Naive thymus-derived CD4-positive, alpha-beta T cell (primary cell): ENCODE measurements at regions of chr1 and their contacts with region 1.

Region 1: DNA sequence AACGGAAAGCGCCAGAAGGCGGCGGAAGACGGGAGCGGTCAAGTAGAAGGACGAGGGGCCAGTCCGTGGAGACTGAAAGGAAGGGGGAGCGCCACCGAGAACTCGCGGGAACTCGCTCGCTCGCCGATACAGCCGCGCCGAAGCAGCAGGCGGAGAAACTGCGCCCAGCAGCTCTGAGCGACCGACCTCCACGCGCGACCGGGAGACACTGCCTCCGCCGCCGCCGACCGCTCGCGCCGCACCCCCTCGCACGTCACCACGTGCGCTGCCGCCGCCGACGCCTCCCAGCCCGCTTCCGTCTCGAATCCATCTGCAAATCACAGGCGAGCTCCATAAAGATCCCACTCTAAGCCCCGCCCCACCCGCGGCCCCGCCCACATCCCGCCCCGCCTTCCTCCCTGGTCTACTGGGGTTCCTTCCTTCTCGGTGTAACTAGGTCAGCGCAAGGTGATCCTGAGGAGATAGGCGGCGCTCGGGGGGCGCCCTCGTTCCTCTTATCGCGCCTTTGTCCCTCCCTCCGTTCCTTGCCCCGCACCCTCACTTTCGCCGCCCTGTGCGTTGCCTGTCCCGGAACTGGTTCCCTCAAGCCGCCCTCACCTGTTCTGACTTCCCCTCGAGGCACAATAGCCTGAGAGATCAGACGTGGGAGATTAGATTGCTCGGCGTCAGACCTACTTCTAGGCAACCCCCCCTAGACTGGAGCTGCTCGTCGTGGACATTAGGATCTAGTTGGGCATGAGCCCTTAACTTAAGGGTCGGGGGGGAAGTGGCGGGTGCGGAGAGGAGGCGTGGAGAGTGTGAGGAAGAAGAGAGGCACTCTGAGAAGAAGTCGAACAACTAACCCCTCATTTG is at the start of gene IVNS1ABP:
- DNase-seq: peak; percentile 91 to 97 (median 95)
- ATAC-seq: peak; percentile 88
- H3K4me3 ChIP-seq: peak within 1 kb of the TSS; percentile 95
- H3K4me3 Mint-ChIP-seq: peak within 1 kb of the TSS; percentile 92 to 100 (median 98)
- H3K27ac ChIP-seq: peak within 1 kb of the TSS; percentile 99
- H3K27ac Mint-ChIP-seq: peak within 1 kb of the TSS; percentile 96 to 99 (median 99)
- H3K4me1 ChIP-seq: peaks cover 31 to 42% of the 10 kb centered on the region in 2 donors
- H3K4me1 Mint-ChIP-seq: peaks cover 39 to 55% (median 46%) of the 10 kb centered on the region in 7 donors
- H3K27me3 ChIP-seq: no peaks in the 10 kb centered on the region
- H3K27me3 Mint-ChIP-seq: peaks cover 0 to 2% (median 0%) of the 10 kb centered on the region in 5 donors
- total RNA-seq, gene IVNS1ABP: 169 to 268 (median 193) TPM

Region 2: GRCh38 chr1:184535191-184535970 is 781.9 kb before region 1 on chr1:
- CTCF ChIA-PET with region 1: no interaction called
- POLR2A ChIA-PET with region 1: no interaction called
- intact Hi-C with region 1: no loop called
- DNase-seq: no peak
- ATAC-seq: no peak
- H3K4me3 ChIP-seq: no peak overlapping the region
- H3K4me3 Mint-ChIP-seq: no peak overlapping the region
- H3K27ac ChIP-seq: no peak overlapping the region
- H3K27ac Mint-ChIP-seq: no peak overlapping the region
- H3K4me1 ChIP-seq: no peaks in the 10 kb centered on the region
- H3K4me1 Mint-ChIP-seq: peaks cover 0 to 8% (median 0%) of the 10 kb centered on the region in 7 donors
- H3K27me3 ChIP-seq: no peaks in the 10 kb centered on the region
- H3K27me3 Mint-ChIP-seq: peaks cover 6 to 22% (median 15%) of the 10 kb centered on the region in 5 donors

Region 3: GRCh38 chr1:184754476-184755225 is 562.6 kb before region 1 on chr1 and contains the start of gene EDEM3:
- CTCF ChIA-PET with region 1: no interaction called
- POLR2A ChIA-PET with region 1: no interaction called
- intact Hi-C with region 1: loop called (anchors 1 kb)
- DNase-seq: peak; percentile 86 to 100 (median 99)
- ATAC-seq: peak; percentile 96
- H3K4me3 ChIP-seq: peak within 1 kb of the TSS; percentile 84
- H3K4me3 Mint-ChIP-seq: peak within 1 kb of the TSS; percentile 87 to 96 (median 94)
- H3K27ac ChIP-seq: peak within 1 kb of the TSS; percentile 91
- H3K27ac Mint-ChIP-seq: peak within 1 kb of the TSS; percentile 71 to 97 (median 93)
- H3K4me1 ChIP-seq: peaks cover 9 to 13% of the 10 kb centered on the region in 2 donors
- H3K4me1 Mint-ChIP-seq: peaks cover 21 to 50% (median 46%) of the 10 kb centered on the region in 7 donors
- H3K27me3 ChIP-seq: no peaks in the 10 kb centered on the region
- H3K27me3 Mint-ChIP-seq: peaks cover 0 to 13% (median 0%) of the 10 kb centered on the region in 5 donors
- total RNA-seq, gene EDEM3: 21.0 to 55.9 (median 33.9) TPM

Region 4: DNA sequence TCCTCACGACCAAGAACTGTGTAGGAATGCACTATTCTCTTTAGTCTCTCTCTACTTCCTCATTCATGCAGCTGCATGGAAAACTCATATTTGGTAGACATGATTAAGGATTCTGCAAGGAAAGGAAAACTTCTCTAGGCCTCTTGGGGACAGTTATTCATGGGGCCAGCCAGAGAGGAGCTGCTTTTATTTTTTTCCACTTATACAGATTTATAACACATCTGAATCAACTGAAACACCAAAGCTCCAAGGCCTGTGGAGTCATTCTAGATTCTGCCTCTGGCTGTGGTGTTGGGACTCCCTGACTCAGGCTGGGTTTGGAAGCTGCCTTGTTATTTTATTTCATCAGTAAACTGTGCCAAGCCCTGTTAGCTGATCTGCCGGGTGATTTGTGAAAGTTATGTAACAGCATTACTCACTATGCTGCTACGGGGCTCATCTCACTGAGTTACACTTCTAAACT is 478.7 kb before region 1 on chr1:
- CTCF ChIA-PET with region 1: no interaction called
- POLR2A ChIA-PET with region 1: no interaction called
- intact Hi-C with region 1: no loop called
- DNase-seq: no peak
- ATAC-seq: peak; percentile 30
- H3K4me3 ChIP-seq: no peak overlapping the region
- H3K4me3 Mint-ChIP-seq: no peak overlapping the region
- H3K27ac ChIP-seq: no peak overlapping the region
- H3K27ac Mint-ChIP-seq: no peak overlapping the region
- H3K4me1 ChIP-seq: peaks cover 0 to 31% of the 10 kb centered on the region in 2 donors
- H3K4me1 Mint-ChIP-seq: peaks cover 0 to 19% (median 5%) of the 10 kb centered on the region in 7 donors
- H3K27me3 ChIP-seq: no peaks in the 10 kb centered on the region
- H3K27me3 Mint-ChIP-seq: no peaks in the 10 kb centered on the region

Region 5: DNA sequence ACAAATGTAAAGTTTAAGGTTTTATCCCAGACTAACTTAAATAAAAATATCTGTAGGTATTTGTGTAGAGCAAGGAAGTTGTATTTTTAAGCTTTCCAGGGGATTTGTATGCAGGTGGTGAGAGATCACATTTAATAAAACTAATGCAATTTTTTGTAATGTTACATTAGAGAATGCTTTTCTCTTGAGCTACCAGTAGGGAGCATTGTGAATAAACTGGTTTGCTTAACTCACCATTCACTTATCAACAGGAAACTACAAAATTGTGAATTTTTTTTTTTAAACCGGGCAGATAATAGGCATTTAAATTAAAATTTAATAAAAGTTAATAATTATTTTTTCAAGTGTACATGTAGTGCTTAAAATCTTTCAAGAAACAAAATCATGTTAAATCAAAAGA is 78.8 kb before region 1 on chr1:
- CTCF ChIA-PET with region 1: interaction called, 19 read pairs
- POLR2A ChIA-PET with region 1: interaction called, 60 read pairs
- intact Hi-C with region 1: loop called (anchors 1 kb)
- DNase-seq: peak in 6 of 9 donors; percentile 11 to 49 (median 35)
- ATAC-seq: peak; percentile 64
- H3K4me3 ChIP-seq: no peak overlapping the region
- H3K4me3 Mint-ChIP-seq: peak overlapping the region in 9 of 10 donors; percentile 3 to 73 (median 45)
- H3K27ac ChIP-seq: no peak overlapping the region
- H3K27ac Mint-ChIP-seq: peak overlapping the region in 4 of 9 donors; percentile 3 to 81 (median 13)
- H3K4me1 ChIP-seq: peaks cover 7 to 10% of the 10 kb centered on the region in 2 donors
- H3K4me1 Mint-ChIP-seq: peaks cover 5 to 33% (median 29%) of the 10 kb centered on the region in 7 donors
- H3K27me3 ChIP-seq: no peaks in the 10 kb centered on the region
- H3K27me3 Mint-ChIP-seq: no peaks in the 10 kb centered on the region

Region 6: DNA sequence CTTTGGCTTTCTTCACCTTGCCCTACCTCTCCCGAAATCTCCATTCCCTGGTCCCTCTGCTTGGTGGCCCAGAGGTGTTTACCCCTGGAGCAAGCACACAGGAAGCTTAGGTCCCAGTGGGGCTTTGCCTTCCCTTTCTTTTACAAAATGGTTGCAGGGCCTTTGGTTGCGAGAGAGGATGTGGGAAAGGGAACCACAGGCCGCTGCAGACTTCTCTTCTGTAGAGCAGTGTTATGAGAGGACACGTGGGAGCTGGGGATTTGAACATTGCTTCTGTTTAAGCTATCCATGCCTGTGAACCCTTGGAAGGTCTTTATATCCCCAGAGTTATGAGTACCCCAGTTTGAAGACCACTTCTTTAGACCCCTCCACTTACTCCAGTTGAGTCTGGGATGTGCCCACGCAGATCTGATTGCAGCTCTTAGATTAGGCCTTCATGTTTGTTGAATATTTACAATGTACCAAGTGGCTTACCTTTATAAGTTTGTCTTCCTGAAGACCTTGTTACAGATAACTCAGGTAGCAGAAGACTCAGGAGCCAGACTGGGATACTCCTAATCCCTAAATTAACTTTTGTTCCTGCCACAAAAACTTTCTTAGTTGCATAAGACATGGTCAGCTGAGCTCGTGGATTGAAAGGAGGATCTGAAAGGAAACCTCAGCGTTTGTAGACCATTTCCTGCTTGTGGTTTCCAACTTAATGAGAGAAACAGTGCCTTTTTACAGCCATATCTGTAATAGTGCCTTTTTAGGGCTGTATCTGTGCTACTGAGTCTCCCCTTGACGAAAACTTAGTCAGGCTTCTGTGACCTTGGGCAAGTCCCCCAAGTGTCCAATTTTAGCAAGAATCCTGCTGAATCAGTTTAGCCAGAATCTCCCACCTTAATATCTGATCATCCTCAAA is 21.7 kb after region 1 on chr1:
- CTCF ChIA-PET with region 1: interaction called, 3 read pairs
- POLR2A ChIA-PET with region 1: interaction called, 10 read pairs
- intact Hi-C with region 1: loop called (anchors 1 kb)
- DNase-seq: peak in 8 of 9 donors; percentile 26 to 61 (median 53)
- ATAC-seq: peak; percentile 89
- H3K4me3 ChIP-seq: peak overlapping the region; percentile 2
- H3K4me3 Mint-ChIP-seq: peak overlapping the region; percentile 37 to 79 (median 61)
- H3K27ac ChIP-seq: peak overlapping the region; percentile 0
- H3K27ac Mint-ChIP-seq: peak overlapping the region; percentile 68 to 92 (median 80)
- H3K4me1 ChIP-seq: peaks cover 25 to 27% of the 10 kb centered on the region in 2 donors
- H3K4me1 Mint-ChIP-seq: peaks cover 20 to 47% (median 43%) of the 10 kb centered on the region in 7 donors
- H3K27me3 ChIP-seq: no peaks in the 10 kb centered on the region
- H3K27me3 Mint-ChIP-seq: peaks cover 0 to 3% (median 0%) of the 10 kb centered on the region in 5 donors

Region 7: DNA sequence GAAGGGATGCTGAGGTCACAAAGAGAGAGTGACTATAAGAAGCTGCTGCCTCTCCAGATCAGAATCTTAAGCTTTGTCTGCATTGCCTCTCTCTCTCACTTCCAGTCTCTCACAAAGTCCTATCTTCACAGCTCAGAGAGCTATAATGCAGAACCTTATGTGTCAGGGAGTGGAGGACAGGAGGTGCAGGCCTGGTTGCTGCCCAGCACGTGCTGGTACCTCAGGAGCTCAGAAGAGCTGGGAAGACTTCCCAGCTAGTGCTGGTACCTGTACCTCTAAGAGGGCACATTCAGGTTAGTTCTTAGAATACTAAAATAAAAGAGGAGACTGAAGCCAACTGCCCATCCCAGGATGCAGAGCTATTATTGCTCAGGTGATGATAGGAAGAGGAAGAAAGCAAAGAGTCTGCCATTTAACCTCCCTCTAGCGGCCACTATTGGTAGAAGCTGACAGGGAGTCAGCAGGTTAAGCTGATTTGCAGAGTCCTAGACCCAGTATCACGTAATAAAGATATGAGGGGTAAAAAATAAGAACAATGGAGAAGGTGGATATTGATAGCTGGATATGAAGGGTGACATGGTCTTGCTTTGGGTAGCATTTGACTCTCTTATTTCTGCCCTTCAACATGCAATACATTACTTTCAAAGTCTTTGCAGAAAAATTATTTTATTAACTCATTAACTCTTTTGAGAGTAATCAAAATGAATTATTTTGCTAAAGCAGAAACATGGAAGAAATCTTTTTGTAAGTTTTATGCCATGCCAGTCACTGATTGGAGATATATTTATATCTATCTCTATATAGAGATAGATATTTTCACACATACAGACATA is 278.8 kb after region 1 on chr1:
- CTCF ChIA-PET with region 1: interaction called, 12 read pairs
- POLR2A ChIA-PET with region 1: interaction called, 9 read pairs
- intact Hi-C with region 1: loop called in 1 of 2 experiments (anchors 1 kb)
- DNase-seq: peak; percentile 16 to 61 (median 45)
- ATAC-seq: peak; percentile 80
- H3K4me3 ChIP-seq: no peak overlapping the region
- H3K4me3 Mint-ChIP-seq: no peak overlapping the region
- H3K27ac ChIP-seq: no peak overlapping the region
- H3K27ac Mint-ChIP-seq: peak overlapping the region in 5 of 9 donors; percentile 17 to 72 (median 51)
- H3K4me1 ChIP-seq: peaks cover 0 to 5% of the 10 kb centered on the region in 2 donors
- H3K4me1 Mint-ChIP-seq: peaks cover 13 to 36% (median 32%) of the 10 kb centered on the region in 7 donors
- H3K27me3 ChIP-seq: no peaks in the 10 kb centered on the region
- H3K27me3 Mint-ChIP-seq: no peaks in the 10 kb centered on the region

Region 8: GRCh38 chr1:186304982-186305949 is 988.0 kb after region 1 on chr1:
- CTCF ChIA-PET with region 1: no interaction called
- POLR2A ChIA-PET with region 1: no interaction called
- intact Hi-C with region 1: loop called in 1 of 2 experiments (anchors 10 kb)
- DNase-seq: peak in 6 of 9 donors; percentile 34 to 51 (median 42)
- ATAC-seq: peak; percentile 39
- H3K4me3 ChIP-seq: no peak overlapping the region
- H3K4me3 Mint-ChIP-seq: peak overlapping the region in 9 of 10 donors; percentile 2 to 76 (median 45)
- H3K27ac ChIP-seq: peak overlapping the region; percentile 58
- H3K27ac Mint-ChIP-seq: peak overlapping the region; percentile 82 to 95 (median 91)
- H3K4me1 ChIP-seq: peaks cover 3 to 83% of the 10 kb centered on the region in 2 donors
- H3K4me1 Mint-ChIP-seq: peaks cover 35 to 66% (median 56%) of the 10 kb centered on the region in 7 donors
- H3K27me3 ChIP-seq: no peaks in the 10 kb centered on the region
- H3K27me3 Mint-ChIP-seq: no peaks in the 10 kb centered on the region